ENCODE measurements at regions of chr6 and their contacts with region 1.

Region 1: DNA sequence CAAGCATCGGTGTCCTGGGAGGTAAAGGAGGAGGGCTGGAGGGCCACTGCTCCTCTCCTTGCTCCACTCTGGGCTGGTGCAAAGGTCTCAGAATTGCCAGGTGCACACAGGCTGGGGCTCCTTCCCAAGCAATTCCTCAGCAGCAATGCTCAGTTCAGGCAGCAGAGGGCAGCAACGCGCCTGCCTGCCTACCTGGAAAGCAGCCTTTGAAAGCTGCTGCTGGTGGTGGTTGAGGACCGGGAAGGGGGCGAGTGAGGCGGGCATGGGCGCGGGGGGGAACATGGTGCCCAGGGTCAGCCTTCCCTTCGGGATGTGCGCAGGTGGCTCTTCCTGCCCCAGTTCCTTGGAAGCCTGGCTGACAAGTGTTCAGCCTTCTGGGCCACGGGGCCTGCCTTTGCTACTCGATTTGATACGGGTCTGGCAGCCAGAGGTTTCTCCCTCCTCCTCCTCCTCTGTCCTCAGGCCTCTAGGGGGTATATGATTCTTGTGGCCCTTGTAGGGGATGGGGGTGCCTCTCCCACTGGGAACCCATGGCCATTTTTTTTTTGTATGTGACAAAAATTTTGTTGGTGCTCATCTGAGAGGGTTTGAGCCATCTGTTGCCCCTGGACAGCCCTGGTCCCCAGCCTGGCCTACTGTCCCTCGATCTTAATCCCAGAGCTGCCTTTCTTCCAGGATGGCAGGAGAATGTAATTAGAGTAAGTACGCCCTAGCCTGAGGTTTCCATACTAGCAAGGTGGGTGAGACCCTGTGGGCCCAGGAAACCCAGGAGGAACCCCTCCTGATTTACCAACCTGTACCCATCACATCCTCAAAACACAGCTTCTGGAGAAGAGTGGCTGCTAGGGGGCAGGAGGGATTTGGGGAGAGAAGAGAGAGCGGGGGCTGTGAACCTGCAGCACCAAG is 20.1 kb downstream of the MRPS18A start:
- DNase-seq: peak; percentile 84 to 91 (median 85)
- ATAC-seq: peak; percentile 80
- H3K4me3 ChIP-seq: no peak overlapping the region
- H3K27ac ChIP-seq: no peak overlapping the region
- H3K4me1 ChIP-seq: peaks cover 37 to 42% of the 10 kb centered on the region in 2 experiments
- H3K27me3 ChIP-seq: no peaks in the 10 kb centered on the region; a peak in 1 of 5 replicates
- CTCF ChIP-seq: peak; percentile 96 to 99 (median 97)
- EP300 ChIP-seq: no peak
- POLR2A ChIP-seq: 0 out of 2 replicates have a peak, but pooled peaks have one; percentile 1
- RAD21 ChIP-seq: peak; percentile 92 to 96

Region 2: DNA sequence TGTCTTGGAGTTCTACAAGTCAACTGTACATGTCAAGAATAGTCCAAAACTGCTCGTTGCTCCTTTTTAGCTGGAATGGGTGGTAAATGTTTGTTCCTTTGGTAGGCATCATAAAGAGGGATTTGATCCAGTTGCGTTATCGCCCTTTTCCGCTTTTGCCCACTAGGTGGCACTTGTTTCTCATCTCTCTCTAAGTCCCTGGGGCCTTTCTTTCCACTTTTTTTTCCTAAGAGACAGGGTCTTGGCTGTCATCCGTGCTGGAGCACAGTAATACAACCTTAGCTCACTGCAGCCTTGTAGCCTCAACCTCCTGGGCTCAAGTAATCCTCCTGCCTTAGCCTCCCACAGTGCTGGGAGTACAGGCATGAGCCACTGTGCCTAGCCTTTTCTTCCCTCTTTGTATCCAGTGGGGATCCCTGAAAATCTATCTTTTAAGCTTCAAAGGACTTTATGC is 59.2 kb before region 1 on chr6:
- CTCF ChIA-PET with region 1: interaction called, 8 read pairs
- POLR2A ChIA-PET with region 1: interaction called, 3 read pairs
- in situ Hi-C with region 1: no loop called
- intact Hi-C with region 1: loop called (anchors 1 kb)
- DNase-seq: peak; percentile 72 to 88 (median 74)
- ATAC-seq: peak; percentile 93
- H3K4me3 ChIP-seq: no peak overlapping the region
- H3K27ac ChIP-seq: no peak overlapping the region; the same call in 2 of the 3 replicates
- H3K4me1 ChIP-seq: peaks cover 3 to 14% of the 10 kb centered on the region in 2 experiments; a peak in 4 of 5 replicates
- H3K27me3 ChIP-seq: no peaks in the 10 kb centered on the region
- CTCF ChIP-seq: peak; percentile 73 to 90 (median 87)
- EP300 ChIP-seq: no peak
- POLR2A ChIP-seq: no peak
- RAD21 ChIP-seq: peak; percentile 75 to 81

Region 3: DNA sequence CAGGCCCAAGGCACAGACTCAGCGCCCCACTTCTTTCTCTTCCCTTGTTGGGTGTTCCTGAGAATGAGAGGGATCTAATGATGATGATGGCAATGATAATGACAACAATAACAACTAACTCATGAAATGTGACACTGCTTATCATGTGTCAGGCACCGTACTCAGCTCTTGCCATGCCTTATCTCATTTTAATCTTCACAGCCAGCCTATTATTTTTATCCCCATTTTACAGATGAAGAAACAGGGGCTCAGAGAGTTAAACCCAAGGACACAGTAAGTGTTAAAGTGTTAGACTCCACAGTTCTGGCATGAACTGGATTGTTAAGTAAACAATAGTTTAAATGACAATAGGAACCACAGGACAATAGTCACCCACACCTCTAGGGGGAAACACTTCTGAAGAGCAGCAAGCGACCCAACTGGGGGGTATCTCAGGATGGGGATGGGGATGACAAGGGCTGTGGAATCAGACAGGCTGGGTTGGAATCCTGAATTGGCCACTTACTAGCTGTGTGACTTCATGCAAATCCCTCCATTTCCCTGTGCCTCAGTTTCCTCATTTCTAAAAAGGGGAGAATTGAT is 10.2 kb before region 1 on chr6:
- CTCF ChIA-PET with region 1: no interaction called
- POLR2A ChIA-PET with region 1: interaction called, 15 read pairs
- in situ Hi-C with region 1: no loop called
- intact Hi-C with region 1: no loop called
- DNase-seq: peak in 1 of 4 experiments; percentile 51
- ATAC-seq: peak; percentile 43; the same call in 1 of the 3 replicates
- H3K4me3 ChIP-seq: no peak overlapping the region
- H3K27ac ChIP-seq: no peak overlapping the region
- H3K4me1 ChIP-seq: peaks cover 3 to 10% of the 10 kb centered on the region in 2 experiments; a peak in 3 of 5 replicates
- H3K27me3 ChIP-seq: no peaks in the 10 kb centered on the region
- CTCF ChIP-seq: peak in 1 of 3 experiments; percentile 13; a peak in 1 of 6 replicates
- EP300 ChIP-seq: no peak
- POLR2A ChIP-seq: no peak
- RAD21 ChIP-seq: no peak

Region 4: GRCh38 chr6:43723737-43724295 is 56.3 kb after region 1 on chr6:
- CTCF ChIA-PET with region 1: no interaction called
- POLR2A ChIA-PET with region 1: interaction called, 5 read pairs
- in situ Hi-C with region 1: no loop called
- intact Hi-C with region 1: loop called (anchors 1 kb)
- DNase-seq: peak; percentile 91 to 94 (median 93)
- ATAC-seq: peak; percentile 87
- H3K4me3 ChIP-seq: no peak overlapping the region
- H3K27ac ChIP-seq: peak overlapping the region; percentile 68; the same call in 1 of the 3 replicates
- H3K4me1 ChIP-seq: peaks cover 25 to 31% of the 10 kb centered on the region in 2 experiments
- H3K27me3 ChIP-seq: no peaks in the 10 kb centered on the region; a peak in 1 of 5 replicates
- CTCF ChIP-seq: peak; percentile 91 to 98 (median 97)
- EP300 ChIP-seq: 0 out of 2 replicates have a peak, but pooled peaks have one; percentile 2
- POLR2A ChIP-seq: no peak
- RAD21 ChIP-seq: peak; percentile 93 to 97

Region 5: DNA sequence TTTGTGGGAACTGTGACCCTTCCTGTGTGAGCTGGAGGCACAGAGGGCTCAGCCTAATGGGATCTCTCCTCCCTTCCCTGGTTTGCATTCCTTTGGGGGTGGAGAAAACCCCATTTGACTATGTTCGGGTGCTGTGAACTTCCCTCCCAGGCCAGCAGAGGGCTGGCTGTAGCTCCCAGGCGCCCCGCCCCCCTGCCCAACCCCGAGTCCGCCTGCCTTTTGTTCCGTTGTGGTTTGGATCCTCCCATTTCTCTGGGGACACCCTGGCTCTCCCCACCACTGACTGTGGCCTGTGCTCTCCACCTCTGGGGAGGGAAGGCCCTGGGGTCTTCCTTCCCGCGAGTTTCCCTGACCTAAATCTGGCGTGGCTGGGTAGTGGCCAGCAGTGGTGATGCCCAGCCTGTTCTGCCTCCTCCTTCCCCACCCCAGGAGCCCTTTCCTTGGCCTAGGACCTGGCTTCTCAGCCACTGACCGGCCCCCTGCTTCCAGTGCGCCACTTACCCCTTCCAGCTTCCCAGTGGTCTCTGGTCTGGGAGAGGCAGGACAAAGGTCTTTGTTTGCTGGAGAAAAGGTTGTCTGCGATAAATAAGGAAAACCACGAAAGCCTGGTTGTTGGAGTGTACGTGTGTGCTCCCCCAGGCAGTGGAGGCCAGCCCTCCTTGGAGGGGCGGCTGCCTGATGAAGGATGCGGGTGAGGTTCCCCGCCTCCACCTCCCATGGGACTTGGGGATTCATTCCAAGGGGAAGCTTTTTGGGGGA is 107.5 kb after region 1 on chr6:
- CTCF ChIA-PET with region 1: interaction called, 11 read pairs
- POLR2A ChIA-PET with region 1: interaction called, 13 read pairs
- in situ Hi-C with region 1: loop called (anchors 5 kb)
- intact Hi-C with region 1: loop called (anchors 5 kb)
- DNase-seq: peak; percentile 88 to 93 (median 90)
- ATAC-seq: peak; percentile 30
- H3K4me3 ChIP-seq: peak overlapping the region; percentile 97
- H3K27ac ChIP-seq: peak overlapping the region; percentile 91
- H3K4me1 ChIP-seq: peaks cover 26 to 57% of the 10 kb centered on the region in 2 experiments
- H3K27me3 ChIP-seq: no peaks in the 10 kb centered on the region
- CTCF ChIP-seq: peak; percentile 88 to 93 (median 92)
- EP300 ChIP-seq: 0 out of 2 replicates have a peak, but pooled peaks have one; percentile 9
- POLR2A ChIP-seq: no peak
- RAD21 ChIP-seq: peak; percentile 66 to 78

Region 6: GRCh38 chr6:43990627-43991619 is 323.4 kb after region 1 on chr6:
- CTCF ChIA-PET with region 1: no interaction called
- POLR2A ChIA-PET with region 1: no interaction called
- in situ Hi-C with region 1: no loop called
- intact Hi-C with region 1: no loop called
- DNase-seq: peak; percentile 45 to 71 (median 62)
- ATAC-seq: peak; percentile 31
- H3K4me3 ChIP-seq: no peak overlapping the region
- H3K27ac ChIP-seq: no peak overlapping the region; the same call in 2 of the 3 replicates
- H3K4me1 ChIP-seq: peaks cover 45 to 53% of the 10 kb centered on the region in 2 experiments
- H3K27me3 ChIP-seq: no peaks in the 10 kb centered on the region
- CTCF ChIP-seq: no peak
- EP300 ChIP-seq: no peak
- POLR2A ChIP-seq: no peak
- RAD21 ChIP-seq: peak in 1 of 2 experiments; percentile 33; a peak in 2 of 4 replicates

Region 7: GRCh38 chr6:44074439-44075136 is 407.1 kb after region 1 on chr6:
- CTCF ChIA-PET with region 1: interaction called, 19 read pairs
- POLR2A ChIA-PET with region 1: interaction called, 4 read pairs
- in situ Hi-C with region 1: loop called (anchors 5 kb)
- intact Hi-C with region 1: loop called (anchors 1 kb)
- DNase-seq: peak; percentile 80 to 94 (median 84)
- ATAC-seq: peak; percentile 79
- H3K4me3 ChIP-seq: peak overlapping the region; percentile 22; the same call in 1 of the 2 replicates
- H3K27ac ChIP-seq: peak overlapping the region; percentile 80
- H3K4me1 ChIP-seq: peaks cover 53 to 70% of the 10 kb centered on the region in 2 experiments; a peak in 4 of 5 replicates
- H3K27me3 ChIP-seq: no peaks in the 10 kb centered on the region
- CTCF ChIP-seq: peak; percentile 93 to 99 (median 94)
- EP300 ChIP-seq: peak; percentile 36
- POLR2A ChIP-seq: no peak
- RAD21 ChIP-seq: peak; percentile 94 to 95